Activated CD4-positive, alpha-beta T cell treated with anti-CD3 and anti-CD28 coated beads, Interleukin-2, amount 10 ng/mL, durations not matched to agents 24 days and 14 days (primary cell): ENCODE measurements at regions of chr13 and their contacts with region 1.

Region 1: GRCh38 chr13:25901460-25902376 is 150.1 kb downstream of the SHISA2 start:
- DNase-seq: peak; percentile 87
- H3K4me3 Mint-ChIP-seq: peak overlapping the region; percentile 24
- H3K27ac Mint-ChIP-seq: peak overlapping the region; percentile 46
- H3K4me1 Mint-ChIP-seq: peaks cover 24% of the 10 kb centered on the region
- H3K27me3 Mint-ChIP-seq: peaks cover 7% of the 10 kb centered on the region

Region 2: GRCh38 chr13:24997367-24997967 is 904.3 kb before region 1 on chr13:
- intact Hi-C with region 1: no loop called
- DNase-seq: peak; percentile 76
- H3K4me3 Mint-ChIP-seq: no peak overlapping the region
- H3K27ac Mint-ChIP-seq: no peak overlapping the region
- H3K4me1 Mint-ChIP-seq: peaks cover 3% of the 10 kb centered on the region
- H3K27me3 Mint-ChIP-seq: peaks cover 26% of the 10 kb centered on the region

Region 3: DNA sequence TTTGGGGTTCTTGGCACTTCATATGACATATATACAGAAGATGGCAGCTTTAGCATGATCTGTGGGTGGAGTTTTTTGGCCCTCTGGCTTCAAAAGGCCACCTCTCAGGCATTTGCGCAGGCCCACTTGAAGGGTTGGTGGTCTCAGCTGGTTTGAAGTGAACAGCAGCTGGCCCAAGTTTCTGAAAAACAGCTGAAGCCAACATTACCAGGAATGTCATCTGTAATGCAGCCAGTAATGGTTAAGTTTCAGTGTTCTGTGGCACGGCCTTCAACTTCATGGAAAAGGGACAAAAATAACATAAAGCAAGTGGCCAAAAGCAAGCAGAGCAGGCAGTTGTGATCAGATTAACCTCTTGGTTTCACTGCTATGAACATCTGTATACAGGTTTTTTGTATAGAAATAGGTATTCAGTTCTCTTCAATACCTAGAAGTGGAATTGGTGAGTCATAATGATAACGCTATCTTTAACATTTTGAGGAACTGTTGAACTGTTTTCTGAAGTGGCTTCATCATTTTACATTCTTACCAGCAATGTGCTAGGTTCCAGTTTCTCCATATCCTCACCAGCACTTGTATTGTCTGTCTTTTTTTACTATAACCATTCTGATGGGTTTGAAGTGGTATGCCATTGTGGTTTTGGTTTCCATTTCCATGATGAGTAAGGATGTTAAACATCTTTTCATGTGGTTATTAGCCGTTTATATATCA is 95.3 kb before region 1 on chr13:
- intact Hi-C with region 1: loop called (anchors 2 kb)
- DNase-seq: peak; percentile 72
- H3K4me3 Mint-ChIP-seq: no peak overlapping the region
- H3K27ac Mint-ChIP-seq: peak overlapping the region; percentile 73
- H3K4me1 Mint-ChIP-seq: peaks cover 16% of the 10 kb centered on the region
- H3K27me3 Mint-ChIP-seq: no peaks in the 10 kb centered on the region

Region 4: DNA sequence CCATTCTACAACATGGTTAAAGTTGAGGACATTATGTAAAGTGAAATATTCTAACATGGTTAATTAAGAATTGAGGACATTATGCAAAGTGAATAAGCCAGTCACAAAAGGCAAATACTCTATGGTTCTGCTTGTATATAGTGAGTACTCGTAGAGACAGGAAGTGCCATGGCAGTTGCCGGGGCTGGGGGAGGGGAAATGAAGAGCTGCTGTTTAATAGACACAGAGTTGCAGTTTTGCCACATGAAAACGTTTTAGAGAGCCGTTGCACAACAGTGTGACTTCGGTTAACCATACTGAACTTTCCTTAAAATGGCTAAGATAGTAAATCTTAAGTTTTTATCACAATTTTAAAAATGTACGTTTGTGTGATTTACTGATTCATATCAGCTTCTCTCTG is 26.8 kb before region 1 on chr13:
- intact Hi-C with region 1: loop called (anchors 1 kb)
- DNase-seq: peak; percentile 89
- H3K4me3 Mint-ChIP-seq: peak overlapping the region; percentile 54
- H3K27ac Mint-ChIP-seq: peak overlapping the region; percentile 17
- H3K4me1 Mint-ChIP-seq: peaks cover 62% of the 10 kb centered on the region
- H3K27me3 Mint-ChIP-seq: no peaks in the 10 kb centered on the region

Region 5: GRCh38 chr13:25958986-25959385 is 57.3 kb after region 1 on chr13:
- intact Hi-C with region 1: no loop called
- DNase-seq: peak; percentile 66
- H3K4me3 Mint-ChIP-seq: peak overlapping the region; percentile 51
- H3K27ac Mint-ChIP-seq: peak overlapping the region; percentile 76
- H3K4me1 Mint-ChIP-seq: peaks cover 27% of the 10 kb centered on the region
- H3K27me3 Mint-ChIP-seq: no peaks in the 10 kb centered on the region

Region 6: DNA sequence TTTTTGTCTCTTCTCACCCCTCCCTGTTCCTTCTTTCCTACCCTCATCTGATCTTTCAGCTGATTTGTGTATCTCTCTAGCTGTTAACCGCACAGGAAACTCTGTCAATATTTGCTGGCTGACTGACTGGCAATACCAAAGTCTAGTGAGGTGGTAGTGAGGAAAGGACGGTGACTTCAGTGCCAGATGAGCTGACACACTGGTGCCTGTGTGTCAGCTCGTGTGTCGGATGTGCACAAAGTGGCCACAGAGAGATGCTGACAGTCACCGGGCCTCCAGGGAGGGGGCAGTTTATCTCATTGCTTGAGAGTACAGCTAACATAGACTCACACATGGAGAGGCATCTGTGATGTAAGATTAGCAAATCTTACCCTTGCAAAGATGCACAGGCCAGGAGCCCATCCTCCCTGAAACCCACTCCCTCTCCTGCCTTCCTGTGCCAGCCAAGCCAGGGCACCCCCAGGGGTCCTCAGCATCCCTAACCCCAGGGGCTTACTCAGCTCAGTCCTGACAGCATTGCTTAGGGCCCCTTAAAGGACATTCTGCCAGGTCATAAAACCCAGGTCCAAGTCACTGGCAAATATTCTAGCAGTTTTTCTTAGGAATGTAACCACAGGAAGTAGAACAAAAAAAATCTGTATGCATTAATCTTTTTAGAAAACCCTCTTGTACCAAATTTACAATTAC is 69.9 kb after region 1 on chr13:
- intact Hi-C with region 1: loop called (anchors 5 kb)
- DNase-seq: peak; percentile 83
- H3K4me3 Mint-ChIP-seq: peak overlapping the region; percentile 36
- H3K27ac Mint-ChIP-seq: peak overlapping the region; percentile 51
- H3K4me1 Mint-ChIP-seq: peaks cover 43% of the 10 kb centered on the region
- H3K27me3 Mint-ChIP-seq: no peaks in the 10 kb centered on the region